Activated CD8-positive, alpha-beta T cell treated with anti-CD3 and anti-CD28 coated beads, Interleukin-2, amount 10 ng/mL, durations not matched to agents 7 days and 5 days (primary cell): ENCODE measurements at regions of chr12 and their contacts with region 1.

Region 1: DNA sequence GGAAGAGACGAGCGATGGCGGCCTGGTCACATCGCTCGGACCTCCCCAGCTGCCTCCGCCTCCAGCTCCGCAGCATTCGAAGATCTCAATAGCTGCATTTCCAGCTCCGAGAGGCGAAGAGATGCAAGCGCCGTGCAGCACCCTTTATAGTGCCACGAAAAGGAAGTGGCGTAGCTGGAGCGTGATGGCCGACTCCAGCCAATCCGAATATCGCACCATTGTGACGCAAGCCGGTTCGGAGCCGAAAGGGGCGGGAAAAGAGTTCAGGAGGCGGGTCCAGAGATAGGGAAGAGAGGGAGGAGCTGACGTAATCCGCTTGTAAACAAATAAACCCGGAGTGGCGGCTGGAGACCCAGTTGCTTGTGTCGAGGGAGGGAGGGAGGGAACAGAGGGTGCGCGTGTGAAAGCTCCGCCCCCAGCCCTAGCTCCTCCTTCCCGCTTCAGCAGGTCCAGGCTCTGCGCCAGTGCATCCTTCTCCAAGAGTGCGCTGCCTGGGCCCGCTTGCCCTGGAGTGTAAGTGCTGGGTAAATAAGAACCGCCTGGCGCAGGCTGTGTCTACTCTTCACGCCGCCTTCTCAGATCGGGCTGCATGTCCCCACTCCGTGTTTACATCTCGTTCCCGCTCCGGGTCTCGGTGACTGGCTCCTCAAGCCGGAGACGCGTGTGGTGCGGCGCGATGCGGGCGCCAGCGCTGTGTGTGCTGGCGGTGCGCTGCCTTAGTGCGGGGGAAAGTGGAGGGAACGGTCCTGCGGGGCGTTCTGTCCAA is at the start of gene BTG1:
- DNase-seq: peak; percentile 99
- ATAC-seq: peak; percentile 73
- H3K4me3 Mint-ChIP-seq: peak within 1 kb of the TSS; percentile 100
- H3K27ac Mint-ChIP-seq: peak within 1 kb of the TSS; percentile 99
- H3K4me1 Mint-ChIP-seq: peaks cover 20% of the 10 kb centered on the region
- H3K27me3 Mint-ChIP-seq: no peaks in the 10 kb centered on the region
- total RNA-seq, gene BTG1: 113 to 118 TPM

Region 2: GRCh38 chr12:91985002-91985787 is 160.7 kb before region 1 on chr12:
- CTCF ChIA-PET with region 1: interaction called, 5 read pairs
- POLR2A ChIA-PET with region 1: interaction called, 10 read pairs
- DNase-seq: no peak
- ATAC-seq: no peak
- H3K4me3 Mint-ChIP-seq: no peak overlapping the region
- H3K27ac Mint-ChIP-seq: no peak overlapping the region
- H3K4me1 Mint-ChIP-seq: peaks cover 20% of the 10 kb centered on the region
- H3K27me3 Mint-ChIP-seq: no peaks in the 10 kb centered on the region

Region 3: DNA sequence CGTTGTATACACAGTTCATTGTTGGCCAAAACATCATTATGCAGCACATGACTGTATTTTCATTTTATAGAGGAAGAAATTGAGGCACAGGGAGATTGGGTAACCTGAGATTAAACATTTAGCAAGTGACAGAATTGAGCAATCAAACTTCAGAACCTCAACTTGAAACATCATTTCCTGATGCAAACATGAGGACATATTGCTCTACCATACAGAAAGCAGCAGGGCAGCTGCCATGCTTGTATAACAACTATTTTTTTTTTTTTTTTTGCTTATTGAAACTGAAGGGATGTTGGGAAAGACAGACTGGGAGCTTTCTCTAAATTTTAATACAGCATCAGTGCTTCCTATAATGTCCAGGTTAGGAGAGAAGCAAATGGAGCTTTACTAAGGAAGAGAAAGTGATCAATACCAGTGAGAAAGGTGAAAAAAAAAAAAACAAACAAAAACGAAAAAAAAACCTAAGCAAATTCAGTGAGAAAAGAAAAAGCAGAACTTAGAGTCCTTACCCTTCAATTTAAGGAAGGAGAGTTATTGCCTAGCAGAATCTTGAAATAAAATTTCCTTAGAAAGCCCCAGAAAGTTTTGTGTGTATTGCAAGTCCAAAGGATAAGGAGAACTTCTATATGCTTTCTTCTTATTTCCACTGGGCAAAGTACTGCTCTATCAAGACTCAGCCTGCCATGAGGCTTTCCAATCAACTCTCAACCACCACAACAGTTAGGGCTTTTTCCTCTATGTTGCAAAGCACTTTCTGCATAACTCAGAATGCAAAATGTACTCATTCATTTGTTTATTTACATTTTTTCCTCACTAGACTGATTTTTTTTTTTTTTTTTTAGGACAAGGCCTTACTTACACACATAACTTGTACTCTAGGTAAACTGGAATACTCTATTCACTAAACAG is 21.9 kb before region 1 on chr12:
- CTCF ChIA-PET with region 1: interaction called, 7 read pairs
- POLR2A ChIA-PET with region 1: interaction called, 10 read pairs
- DNase-seq: no peak
- ATAC-seq: peak; percentile 35
- H3K4me3 Mint-ChIP-seq: peak overlapping the region; percentile 37
- H3K27ac Mint-ChIP-seq: peak overlapping the region; percentile 76
- H3K4me1 Mint-ChIP-seq: peaks cover 48% of the 10 kb centered on the region
- H3K27me3 Mint-ChIP-seq: no peaks in the 10 kb centered on the region

Region 4: DNA sequence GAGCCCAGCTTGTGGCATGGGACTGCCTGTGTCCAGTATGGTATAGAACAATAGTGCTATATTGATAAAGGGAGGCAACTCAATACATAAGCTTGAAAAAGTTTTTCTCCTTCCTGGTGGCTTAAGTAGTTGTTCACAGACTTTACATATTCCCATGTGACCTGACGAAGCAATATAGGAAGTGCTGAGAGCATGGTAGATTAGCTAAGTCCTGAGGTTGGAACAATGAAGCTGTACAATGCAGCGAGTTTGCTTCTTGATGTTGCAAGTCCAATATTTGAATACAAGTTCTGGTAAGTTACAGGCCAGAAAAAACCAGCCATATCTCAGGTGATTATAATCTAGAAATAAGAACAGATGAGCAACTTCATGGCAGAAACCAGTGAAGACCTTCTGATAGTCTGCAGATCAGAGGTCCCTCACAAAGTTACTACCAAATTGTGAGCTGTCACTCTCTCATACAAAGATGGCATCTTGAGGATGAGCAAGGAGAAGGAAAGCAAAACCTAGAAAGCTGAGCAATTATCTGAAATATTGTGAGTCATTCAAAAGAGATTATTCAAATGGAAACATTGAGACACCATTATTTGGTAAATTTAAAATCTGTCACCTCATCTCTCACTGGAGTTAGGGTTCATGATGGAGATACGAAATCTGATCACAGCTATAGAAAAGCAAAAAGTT is 72.6 kb after region 1 on chr12:
- CTCF ChIA-PET with region 1: interaction called, 4 read pairs
- POLR2A ChIA-PET with region 1: interaction called, 26 read pairs
- DNase-seq: no peak
- ATAC-seq: no peak
- H3K4me3 Mint-ChIP-seq: no peak overlapping the region
- H3K27ac Mint-ChIP-seq: no peak overlapping the region
- H3K4me1 Mint-ChIP-seq: peaks cover 9% of the 10 kb centered on the region
- H3K27me3 Mint-ChIP-seq: no peaks in the 10 kb centered on the region

Region 5: GRCh38 chr12:92505254-92506231 is 359.6 kb after region 1 on chr12:
- CTCF ChIA-PET with region 1: interaction called, 3 read pairs
- POLR2A ChIA-PET with region 1: interaction called, 33 read pairs
- DNase-seq: peak; percentile 56
- ATAC-seq: peak; percentile 70
- H3K4me3 Mint-ChIP-seq: peak overlapping the region; percentile 69
- H3K27ac Mint-ChIP-seq: peak overlapping the region; percentile 92
- H3K4me1 Mint-ChIP-seq: peaks cover 44% of the 10 kb centered on the region
- H3K27me3 Mint-ChIP-seq: no peaks in the 10 kb centered on the region

Region 6: DNA sequence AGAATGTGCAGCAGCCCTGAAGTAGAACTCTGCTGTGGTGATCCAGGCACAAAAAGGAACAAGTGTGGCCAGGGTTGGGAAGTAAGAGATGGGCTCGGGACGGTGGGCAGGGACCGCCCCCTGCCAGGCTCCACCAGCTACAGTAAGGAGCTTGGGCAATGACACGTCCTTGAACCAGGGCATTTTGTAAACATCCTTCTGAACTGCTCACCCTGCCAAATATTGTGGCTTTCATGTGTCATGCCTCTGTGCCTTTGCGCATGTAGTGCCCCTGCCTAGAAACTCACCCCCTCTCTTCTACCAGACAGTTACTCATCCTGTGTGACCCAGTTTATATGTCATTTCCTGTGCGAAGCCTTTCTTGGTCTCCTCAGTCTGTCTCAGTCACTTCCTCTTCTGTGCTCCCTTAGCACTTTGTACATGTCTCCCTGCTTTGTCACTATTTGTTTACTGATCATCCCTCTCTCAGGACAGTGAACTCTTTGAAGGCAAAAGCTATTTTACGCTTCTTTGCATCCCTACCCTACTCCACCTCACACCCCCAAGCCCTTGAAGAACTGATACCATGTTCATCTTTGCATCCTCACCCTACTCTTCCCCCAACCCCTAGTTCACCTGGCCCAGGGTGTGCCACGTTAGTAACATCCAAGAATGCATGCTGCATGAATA is 448.0 kb after region 1 on chr12:
- CTCF ChIA-PET with region 1: interaction called, 4 read pairs
- POLR2A ChIA-PET with region 1: interaction called, 12 read pairs
- DNase-seq: peak; percentile 85
- ATAC-seq: peak; percentile 99
- H3K4me3 Mint-ChIP-seq: peak overlapping the region; percentile 49
- H3K27ac Mint-ChIP-seq: peak overlapping the region; percentile 94
- H3K4me1 Mint-ChIP-seq: peaks cover 31% of the 10 kb centered on the region
- H3K27me3 Mint-ChIP-seq: no peaks in the 10 kb centered on the region

Region 7: DNA sequence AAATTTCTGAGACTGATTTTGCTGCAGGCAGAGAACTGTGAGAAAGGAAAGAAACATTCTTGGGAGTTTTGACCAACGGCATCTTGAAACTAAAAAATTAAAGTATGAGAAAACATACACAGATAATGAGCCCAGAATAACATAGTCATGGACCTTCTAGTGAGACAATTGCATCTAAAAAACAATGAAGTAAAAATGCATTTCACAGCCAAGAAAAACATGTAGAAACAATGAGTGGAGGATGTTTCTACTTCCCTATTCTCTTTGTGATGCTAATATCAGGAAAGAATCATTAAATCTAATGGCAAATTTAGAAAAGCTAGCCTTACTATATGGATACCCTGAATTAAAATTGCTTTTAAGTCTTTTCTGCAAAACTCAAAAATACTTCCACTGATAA is 544.7 kb after region 1 on chr12:
- CTCF ChIA-PET with region 1: no interaction called
- POLR2A ChIA-PET with region 1: no interaction called
- DNase-seq: no peak
- ATAC-seq: no peak
- H3K4me3 Mint-ChIP-seq: no peak overlapping the region
- H3K27ac Mint-ChIP-seq: no peak overlapping the region
- H3K4me1 Mint-ChIP-seq: no peaks in the 10 kb centered on the region
- H3K27me3 Mint-ChIP-seq: no peaks in the 10 kb centered on the region